Activated CD4-positive, alpha-beta T cell treated with anti-CD3 and anti-CD28 coated beads, Interleukin-2, amount 10 ng/mL, durations not matched to agents 24 days and 14 days (primary cell): ENCODE measurements at regions of chr18 and their contacts with region 1.

Region 1: GRCh38 chr18:56066524-56067213 is 478.7 kb upstream of the TCF4 start:
- DNase-seq: no peak
- H3K4me3 Mint-ChIP-seq: no peak overlapping the region
- H3K27ac Mint-ChIP-seq: no peak overlapping the region
- H3K4me1 Mint-ChIP-seq: no peaks in the 10 kb centered on the region
- H3K27me3 Mint-ChIP-seq: no peaks in the 10 kb centered on the region

Region 2: GRCh38 chr18:56038171-56039030 is 28.3 kb before region 1 on chr18:
- intact Hi-C with region 1: loop called (anchors 1 kb)
- DNase-seq: no peak
- H3K4me3 Mint-ChIP-seq: no peak overlapping the region
- H3K27ac Mint-ChIP-seq: no peak overlapping the region
- H3K4me1 Mint-ChIP-seq: no peaks in the 10 kb centered on the region
- H3K27me3 Mint-ChIP-seq: no peaks in the 10 kb centered on the region